AG04450 (cell line): ENCODE measurements at regions of chr19 and their contacts with region 1.

Region 1: GRCh38 chr19:54203151-54203611 is 2.5 kb downstream of the RPS9 start:
- DNase-seq: no peak
- H3K4me3 ChIP-seq: peak overlapping the region; percentile 94
- H3K27ac ChIP-seq: no peak overlapping the region
- H3K27me3 ChIP-seq: no peaks in the 10 kb centered on the region
- CTCF ChIP-seq: no peak

Region 2: GRCh38 chr19:54096617-54097129 is 106.5 kb before region 1 on chr19:
- CTCF ChIA-PET with region 1: no interaction called
- POLR2A ChIA-PET with region 1: interaction called, 11 read pairs
- DNase-seq: no peak
- H3K4me3 ChIP-seq: peak overlapping the region; percentile 49
- H3K27ac ChIP-seq: no peak overlapping the region
- H3K27me3 ChIP-seq: no peaks in the 10 kb centered on the region
- CTCF ChIP-seq: peak; percentile 55